ENCODE measurements at regions of chr5 and their contacts with region 1.

Region 1: GRCh38 chr5:73902327-73903051 is 276.5 kb downstream of the ARHGEF28 start:
- DNase-seq: peak; percentile 48
- H3K4me3 ChIP-seq: no peak overlapping the region
- H3K27ac ChIP-seq: peak overlapping the region; percentile 96
- H3K4me1 ChIP-seq: peaks cover 33% of the 10 kb centered on the region
- H3K27me3 ChIP-seq: no peaks in the 10 kb centered on the region
- CTCF ChIP-seq: peak; percentile 58 to 76

Region 2: DNA sequence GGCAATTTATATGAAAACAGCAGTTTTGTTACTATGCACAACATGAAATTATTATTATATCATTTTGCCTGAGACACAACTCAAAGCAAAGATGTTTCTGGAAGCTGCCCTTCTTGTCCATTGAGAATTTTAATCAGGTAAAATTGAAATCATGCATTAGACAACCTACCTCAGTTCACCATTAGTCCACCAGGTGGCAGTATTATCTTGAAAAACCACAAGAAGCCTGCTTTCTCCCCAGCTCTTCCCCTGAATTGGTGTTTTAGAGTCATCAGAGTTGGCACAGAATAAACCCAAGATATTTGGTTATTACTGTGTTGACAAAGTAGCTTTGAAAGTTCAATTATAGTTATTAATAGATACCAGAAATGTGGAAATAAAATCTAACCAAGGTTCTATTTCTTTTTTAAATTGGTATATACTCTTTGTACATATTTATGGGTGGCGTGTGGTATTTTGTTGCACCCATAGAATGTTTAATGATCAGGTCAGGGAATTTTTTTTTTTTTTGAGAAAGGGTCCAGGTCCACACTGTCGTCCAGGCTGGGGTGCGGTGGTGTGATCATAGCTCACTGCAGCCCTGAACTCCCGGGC is 311.3 kb before region 1 on chr5:
- CTCF ChIA-PET with region 1: no interaction called
- dilution Hi-C with region 1: no loop called
- in situ Hi-C with region 1: no loop called
- intact Hi-C with region 1: loop called (anchors 1 kb)
- DNase-seq: peak; percentile 69
- H3K4me3 ChIP-seq: no peak overlapping the region
- H3K27ac ChIP-seq: no peak overlapping the region
- H3K4me1 ChIP-seq: peaks cover 7% of the 10 kb centered on the region
- H3K27me3 ChIP-seq: no peaks in the 10 kb centered on the region
- CTCF ChIP-seq: peak; percentile 71 to 86

Region 3: GRCh38 chr5:73701518-73701917 is 201.0 kb before region 1 on chr5:
- CTCF ChIA-PET with region 1: no interaction called
- dilution Hi-C with region 1: no loop called
- in situ Hi-C with region 1: no loop called
- intact Hi-C with region 1: no loop called
- DNase-seq: peak; percentile 86
- H3K4me3 ChIP-seq: peak overlapping the region in 1 of 3 experiments; percentile 1
- H3K27ac ChIP-seq: peak overlapping the region; percentile 30
- H3K4me1 ChIP-seq: peaks cover 12% of the 10 kb centered on the region
- H3K27me3 ChIP-seq: no peaks in the 10 kb centered on the region
- CTCF ChIP-seq: no peak

Region 4: GRCh38 chr5:73917433-73917832 is 14.9 kb after region 1 on chr5:
- CTCF ChIA-PET with region 1: no interaction called
- dilution Hi-C with region 1: no loop called
- in situ Hi-C with region 1: no loop called
- intact Hi-C with region 1: no loop called
- DNase-seq: no peak
- H3K4me3 ChIP-seq: no peak overlapping the region
- H3K27ac ChIP-seq: no peak overlapping the region
- H3K4me1 ChIP-seq: no peaks in the 10 kb centered on the region
- H3K27me3 ChIP-seq: no peaks in the 10 kb centered on the region
- CTCF ChIP-seq: no peak

Region 5: DNA sequence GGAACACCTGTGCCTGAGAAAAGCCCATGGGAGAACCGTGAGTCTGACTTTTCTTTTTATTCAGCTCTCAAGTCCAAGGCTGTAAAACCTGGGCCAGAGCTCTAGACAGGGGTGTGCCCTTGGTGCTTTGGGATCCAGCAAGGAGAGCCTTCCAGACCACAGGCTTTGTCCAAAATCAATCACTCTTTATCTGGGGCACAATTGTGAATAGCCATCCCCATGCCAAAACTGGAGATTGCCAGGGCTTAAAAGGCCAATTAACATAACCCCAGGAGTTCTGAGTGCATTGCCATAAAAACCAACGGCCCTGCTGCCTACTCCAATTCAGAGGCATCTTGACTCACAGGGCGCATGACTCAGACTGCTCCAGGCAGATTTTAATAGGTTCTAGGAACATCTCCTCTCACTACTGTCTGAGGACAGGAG is 115.3 kb after region 1 on chr5:
- CTCF ChIA-PET with region 1: no interaction called
- dilution Hi-C with region 1: loop called (anchors 25 kb)
- in situ Hi-C with region 1: no loop called
- intact Hi-C with region 1: no loop called
- DNase-seq: peak; percentile 94
- H3K4me3 ChIP-seq: no peak overlapping the region
- H3K27ac ChIP-seq: peak overlapping the region; percentile 82
- H3K4me1 ChIP-seq: peaks cover 41% of the 10 kb centered on the region
- H3K27me3 ChIP-seq: no peaks in the 10 kb centered on the region
- CTCF ChIP-seq: no peak

Region 6: GRCh38 chr5:74127381-74128320 is 225.2 kb after region 1 on chr5:
- CTCF ChIA-PET with region 1: no interaction called
- dilution Hi-C with region 1: no loop called
- in situ Hi-C with region 1: no loop called
- intact Hi-C with region 1: loop called (anchors 5 kb)
- DNase-seq: peak; percentile 48
- H3K4me3 ChIP-seq: peak overlapping the region in 2 of 3 experiments; percentile 15 to 27
- H3K27ac ChIP-seq: no peak overlapping the region
- H3K4me1 ChIP-seq: peaks cover 15% of the 10 kb centered on the region
- H3K27me3 ChIP-seq: no peaks in the 10 kb centered on the region
- CTCF ChIP-seq: peak; percentile 46 to 62

Region 7: DNA sequence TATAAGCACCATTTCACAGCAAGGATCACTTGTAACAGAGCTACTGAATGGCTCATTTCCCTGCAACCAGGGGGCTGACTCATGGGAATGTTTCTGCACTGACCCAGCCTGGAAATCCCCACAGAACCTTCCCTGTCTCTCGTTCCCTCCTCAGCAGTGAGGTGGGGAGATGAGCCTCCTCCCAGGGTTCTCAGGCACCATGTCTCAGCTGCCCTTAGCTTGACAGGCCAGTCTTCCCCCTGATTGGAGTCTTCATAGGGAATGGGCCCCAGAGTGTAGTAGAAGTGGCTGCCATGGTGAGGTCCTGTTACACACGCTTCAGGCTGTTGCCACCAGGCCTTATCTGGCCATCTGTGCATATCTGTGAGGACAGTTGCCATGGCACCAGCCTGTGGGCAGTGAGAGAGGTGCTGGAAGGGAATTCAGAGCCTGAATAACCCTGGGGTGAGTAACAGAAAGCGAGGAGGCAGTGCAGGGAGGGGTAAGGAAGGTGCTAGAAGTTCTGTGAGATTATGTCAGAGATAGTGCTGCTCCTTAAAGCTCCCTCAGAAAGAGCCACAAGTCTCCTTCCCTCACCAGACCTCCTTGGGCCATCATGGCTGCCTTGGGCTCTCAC is 413.7 kb after region 1 on chr5:
- CTCF ChIA-PET with region 1: no interaction called
- dilution Hi-C with region 1: no loop called
- in situ Hi-C with region 1: no loop called
- intact Hi-C with region 1: loop called (anchors 10 kb)
- DNase-seq: peak; percentile 99
- H3K4me3 ChIP-seq: no peak overlapping the region
- H3K27ac ChIP-seq: peak overlapping the region; percentile 98
- H3K4me1 ChIP-seq: peaks cover 52% of the 10 kb centered on the region
- H3K27me3 ChIP-seq: no peaks in the 10 kb centered on the region
- CTCF ChIP-seq: no peak

Region 8: GRCh38 chr5:74543156-74543995 is 640.9 kb after region 1 on chr5:
- CTCF ChIA-PET with region 1: no interaction called
- dilution Hi-C with region 1: loop called (anchors 25 kb)
- in situ Hi-C with region 1: no loop called
- intact Hi-C with region 1: loop called (anchors 10 kb)
- DNase-seq: peak; percentile 91
- H3K4me3 ChIP-seq: peak overlapping the region in 1 of 3 experiments; percentile 16
- H3K27ac ChIP-seq: peak overlapping the region; percentile 92
- H3K4me1 ChIP-seq: peaks cover 46% of the 10 kb centered on the region
- H3K27me3 ChIP-seq: no peaks in the 10 kb centered on the region
- CTCF ChIP-seq: no peak

Region 9: DNA sequence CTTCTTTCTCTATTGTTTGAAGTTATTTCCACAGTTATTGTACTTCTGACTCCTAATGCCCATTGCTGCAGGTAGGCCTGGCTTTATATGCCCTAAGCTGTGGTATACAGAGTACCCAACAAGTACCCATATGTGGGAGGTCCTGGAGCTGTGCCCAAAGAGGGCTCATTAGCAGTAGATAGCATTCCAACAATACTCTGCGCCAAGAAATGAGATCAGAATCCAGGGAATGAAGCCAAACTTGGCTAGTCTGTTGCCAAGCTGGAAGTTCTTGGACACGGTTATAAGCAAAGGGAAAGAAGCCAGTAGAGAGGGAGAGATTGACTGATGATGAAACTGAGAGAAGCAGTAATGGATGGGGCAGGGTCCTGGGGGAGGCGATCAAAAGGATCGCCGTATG is 993.4 kb after region 1 on chr5:
- CTCF ChIA-PET with region 1: no interaction called
- dilution Hi-C with region 1: loop called (anchors 25 kb)
- in situ Hi-C with region 1: loop called (anchors 25 kb)
- intact Hi-C with region 1: no loop called
- DNase-seq: peak; percentile 52
- H3K4me3 ChIP-seq: no peak overlapping the region
- H3K27ac ChIP-seq: no peak overlapping the region
- H3K4me1 ChIP-seq: no peaks in the 10 kb centered on the region
- H3K27me3 ChIP-seq: no peaks in the 10 kb centered on the region
- CTCF ChIP-seq: no peak